AG04449 (cell line): ENCODE measurements at regions of chr2 and their contacts with region 1.

Region 1: GRCh38 chr2:37902991-37903390 is 22.1 kb upstream of the RMDN2 start:
- DNase-seq: no peak
- H3K4me3 ChIP-seq: no peak overlapping the region
- CTCF ChIP-seq: no peak

Region 2: GRCh38 chr2:37890893-37891495 is 12.0 kb before region 1 on chr2:
- CTCF ChIA-PET with region 1: interaction called, 11 read pairs
- POLR2A ChIA-PET with region 1: no interaction called
- DNase-seq: no peak
- H3K4me3 ChIP-seq: no peak overlapping the region
- CTCF ChIP-seq: peak; percentile 84